ENCODE measurements at regions of chr15 and their contacts with region 1.

Region 1: GRCh38 chr15:85296615-85297402 is 83.6 kb upstream of the AKAP13 start:
- DNase-seq: peak; percentile 91
- H3K4me3 ChIP-seq: peak overlapping the region; percentile 37
- H3K27ac ChIP-seq: no peak overlapping the region
- H3K4me1 ChIP-seq: peaks cover 32% of the 10 kb centered on the region
- CTCF ChIP-seq: peak; percentile 93

Region 2: DNA sequence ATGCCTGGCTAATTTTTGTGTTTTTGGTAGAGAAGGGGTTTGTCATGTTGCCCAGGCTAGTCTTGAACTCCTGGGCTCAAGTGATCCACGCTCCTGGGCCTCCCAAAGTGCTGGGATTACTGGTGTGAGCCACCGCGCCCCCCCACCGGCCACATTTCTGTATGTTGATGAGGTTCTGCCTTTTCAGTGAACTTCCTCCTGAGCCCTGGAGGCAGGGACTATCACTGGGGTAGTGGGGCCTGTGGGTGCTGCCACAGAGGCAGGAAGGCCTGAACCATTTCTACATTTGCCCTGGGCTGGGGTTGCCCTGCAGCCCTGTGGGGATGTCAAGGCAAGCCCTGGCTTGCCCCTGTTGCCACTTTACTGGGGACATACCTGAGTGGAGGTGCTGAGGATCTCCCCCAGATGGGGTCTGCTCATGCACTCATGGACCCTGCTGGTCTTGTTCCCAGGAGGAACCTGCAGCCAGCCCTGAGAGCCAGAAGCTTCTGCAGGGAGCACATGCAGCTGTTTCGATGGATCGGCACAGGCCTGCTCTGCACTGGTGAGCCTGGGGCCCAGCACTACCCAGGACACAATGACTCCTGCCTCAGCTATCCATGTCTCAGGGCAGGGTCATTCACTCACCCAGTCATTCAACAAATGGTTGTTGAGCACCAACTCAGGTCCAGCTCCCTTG is 406.7 kb before region 1 on chr15:
- CTCF ChIA-PET with region 1: no interaction called
- POLR2A ChIA-PET with region 1: no interaction called
- intact Hi-C with region 1: no loop called
- DNase-seq: no peak
- H3K4me3 ChIP-seq: no peak overlapping the region
- H3K27ac ChIP-seq: no peak overlapping the region
- H3K4me1 ChIP-seq: no peaks in the 10 kb centered on the region
- CTCF ChIP-seq: no peak

Region 3: GRCh38 chr15:85168642-85169173 is 128.1 kb before region 1 on chr15:
- CTCF ChIA-PET with region 1: no interaction called
- POLR2A ChIA-PET with region 1: no interaction called
- intact Hi-C with region 1: no loop called
- DNase-seq: peak; percentile 47
- H3K4me3 ChIP-seq: no peak overlapping the region
- H3K27ac ChIP-seq: no peak overlapping the region
- H3K4me1 ChIP-seq: no peaks in the 10 kb centered on the region
- CTCF ChIP-seq: peak; percentile 79

Region 4: GRCh38 chr15:85324202-85324601 is 27.4 kb after region 1 on chr15:
- CTCF ChIA-PET with region 1: interaction called, 8 read pairs
- POLR2A ChIA-PET with region 1: interaction called, 12 read pairs
- intact Hi-C with region 1: no loop called
- DNase-seq: no peak
- H3K4me3 ChIP-seq: no peak overlapping the region
- H3K27ac ChIP-seq: no peak overlapping the region
- H3K4me1 ChIP-seq: peaks cover 43% of the 10 kb centered on the region
- CTCF ChIP-seq: no peak

Region 5: DNA sequence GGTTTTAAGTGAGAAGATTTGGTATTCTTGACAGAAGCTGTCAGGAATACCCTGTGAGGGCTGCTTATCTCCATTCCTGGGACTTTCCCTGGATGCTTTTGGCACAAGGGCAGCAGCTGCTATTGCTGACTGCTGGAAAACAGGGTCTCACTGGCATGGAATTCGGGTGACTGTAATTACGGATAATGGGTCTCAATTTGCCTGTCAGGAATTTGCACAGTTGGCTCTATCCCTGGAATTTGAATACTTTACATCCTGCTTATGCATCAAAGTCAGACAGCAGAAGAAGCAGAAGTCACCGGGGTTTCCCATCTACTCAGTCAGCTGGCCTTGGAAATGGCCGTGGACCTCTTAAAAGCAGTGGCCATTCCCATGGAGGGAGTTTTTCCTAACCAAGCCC is 57.7 kb after region 1 on chr15:
- CTCF ChIA-PET with region 1: no interaction called
- POLR2A ChIA-PET with region 1: no interaction called
- intact Hi-C with region 1: no loop called
- DNase-seq: no peak
- H3K4me3 ChIP-seq: no peak overlapping the region
- H3K27ac ChIP-seq: no peak overlapping the region
- H3K4me1 ChIP-seq: no peaks in the 10 kb centered on the region
- CTCF ChIP-seq: no peak

Region 6: GRCh38 chr15:85412956-85413854 is 116.4 kb after region 1 on chr15:
- CTCF ChIA-PET with region 1: interaction called, 4 read pairs
- POLR2A ChIA-PET with region 1: interaction called, 9 read pairs
- intact Hi-C with region 1: loop called (anchors 1 kb)
- DNase-seq: peak; percentile 90
- H3K4me3 ChIP-seq: peak overlapping the region; percentile 49
- H3K27ac ChIP-seq: peak overlapping the region; percentile 71
- H3K4me1 ChIP-seq: peaks cover 72% of the 10 kb centered on the region
- CTCF ChIP-seq: peak; percentile 54; the same call in 1 of the 2 replicates

Region 7: GRCh38 chr15:85485956-85486567 is 189.3 kb after region 1 on chr15:
- CTCF ChIA-PET with region 1: no interaction called
- POLR2A ChIA-PET with region 1: no interaction called
- intact Hi-C with region 1: loop called (anchors 5 kb)
- DNase-seq: peak; percentile 81
- H3K4me3 ChIP-seq: no peak overlapping the region
- H3K27ac ChIP-seq: no peak overlapping the region
- H3K4me1 ChIP-seq: peaks cover 76% of the 10 kb centered on the region
- CTCF ChIP-seq: peak; percentile 91

Region 8: DNA sequence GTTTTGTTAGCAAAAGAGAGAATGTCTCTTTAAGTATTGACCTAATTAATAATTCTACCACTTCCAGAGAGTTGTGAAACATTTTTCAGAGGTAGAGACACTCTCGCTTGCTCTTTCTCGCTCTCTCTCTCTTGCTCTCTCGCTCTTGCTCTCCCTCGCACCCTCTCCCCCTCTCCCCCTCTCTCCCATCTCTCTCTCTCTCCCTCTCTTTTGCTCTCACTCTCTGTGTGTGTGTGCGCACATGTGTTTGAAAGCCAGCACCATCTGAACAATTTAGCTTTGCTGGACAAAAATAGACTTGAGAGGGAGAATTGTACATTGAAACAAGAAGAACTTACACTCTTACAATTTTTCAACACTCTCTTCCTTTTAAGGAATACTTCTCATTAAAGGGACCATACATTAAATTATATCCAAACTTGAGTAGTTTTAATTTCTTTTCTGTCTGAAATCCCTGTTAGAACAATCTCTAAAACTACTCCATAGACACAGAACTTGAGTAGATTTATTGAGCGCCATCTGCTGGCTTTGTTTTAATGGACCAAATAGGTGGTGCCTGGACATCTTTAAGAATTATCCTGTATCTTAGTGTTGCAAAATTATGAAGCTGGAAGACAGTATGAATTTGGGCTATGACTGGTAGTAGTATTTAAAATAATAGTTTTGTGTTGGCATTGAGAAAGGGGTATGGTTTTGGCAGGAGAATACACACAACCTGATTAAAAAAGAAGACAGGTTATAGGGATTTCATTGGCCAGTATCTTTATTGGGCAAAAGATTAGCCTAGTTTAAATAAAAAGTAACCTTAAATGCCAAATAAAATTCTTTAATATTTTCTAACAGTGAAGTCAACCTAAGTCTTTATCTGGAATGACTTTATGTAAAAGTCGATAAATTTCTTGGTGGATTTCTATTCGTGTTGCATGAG is 208.2 kb after region 1 on chr15:
- CTCF ChIA-PET with region 1: no interaction called
- POLR2A ChIA-PET with region 1: interaction called, 4 read pairs
- intact Hi-C with region 1: loop called (anchors 1 kb)
- DNase-seq: peak; percentile 78
- H3K4me3 ChIP-seq: no peak overlapping the region
- H3K27ac ChIP-seq: peak overlapping the region; percentile 27
- H3K4me1 ChIP-seq: peaks cover 31% of the 10 kb centered on the region
- CTCF ChIP-seq: peak; percentile 99

Region 9: DNA sequence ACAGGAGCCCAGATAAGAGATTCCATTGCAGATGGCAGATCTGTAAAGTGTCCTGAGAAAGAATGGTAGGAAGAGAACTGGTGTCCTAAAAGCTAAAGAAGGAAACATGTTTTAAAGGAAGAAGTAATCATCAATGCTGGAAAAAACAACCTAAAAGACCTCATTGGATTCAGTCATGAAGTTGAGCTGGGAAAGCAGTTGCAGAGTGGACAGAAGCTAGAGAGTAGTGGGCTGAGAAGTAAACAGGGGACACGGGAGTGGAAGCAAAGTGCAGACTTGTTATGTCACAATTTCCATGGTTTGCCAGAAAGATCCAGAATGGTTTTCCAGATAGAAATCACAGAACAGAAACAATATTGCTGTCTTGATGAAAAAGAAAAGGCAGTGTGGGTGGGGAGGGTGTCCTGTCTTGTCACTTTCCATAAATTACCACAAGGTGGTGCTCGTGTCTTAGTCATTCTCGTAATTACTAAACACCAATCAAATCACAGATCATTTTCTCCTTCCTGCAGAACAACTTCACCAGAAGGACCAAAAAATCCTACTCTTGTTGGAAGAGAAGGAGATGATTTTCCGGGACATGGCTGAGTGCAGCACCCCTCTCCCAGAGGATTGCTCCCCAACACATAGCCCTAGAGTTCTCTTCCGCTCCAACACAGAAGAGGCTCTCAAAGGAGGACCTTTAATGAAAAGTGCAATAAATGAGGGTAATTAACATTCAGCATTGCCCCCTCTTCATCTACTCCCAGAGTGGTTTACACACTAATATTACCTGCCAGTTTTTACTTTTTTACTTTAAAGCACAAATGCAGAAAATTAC is 433.4 kb after region 1 on chr15:
- CTCF ChIA-PET with region 1: no interaction called
- POLR2A ChIA-PET with region 1: no interaction called
- intact Hi-C with region 1: loop called (anchors 10 kb)
- DNase-seq: peak; percentile 74
- H3K4me3 ChIP-seq: no peak overlapping the region
- H3K27ac ChIP-seq: peak overlapping the region; percentile 16
- H3K4me1 ChIP-seq: no peaks in the 10 kb centered on the region
- CTCF ChIP-seq: peak; percentile 85

Region 10: DNA sequence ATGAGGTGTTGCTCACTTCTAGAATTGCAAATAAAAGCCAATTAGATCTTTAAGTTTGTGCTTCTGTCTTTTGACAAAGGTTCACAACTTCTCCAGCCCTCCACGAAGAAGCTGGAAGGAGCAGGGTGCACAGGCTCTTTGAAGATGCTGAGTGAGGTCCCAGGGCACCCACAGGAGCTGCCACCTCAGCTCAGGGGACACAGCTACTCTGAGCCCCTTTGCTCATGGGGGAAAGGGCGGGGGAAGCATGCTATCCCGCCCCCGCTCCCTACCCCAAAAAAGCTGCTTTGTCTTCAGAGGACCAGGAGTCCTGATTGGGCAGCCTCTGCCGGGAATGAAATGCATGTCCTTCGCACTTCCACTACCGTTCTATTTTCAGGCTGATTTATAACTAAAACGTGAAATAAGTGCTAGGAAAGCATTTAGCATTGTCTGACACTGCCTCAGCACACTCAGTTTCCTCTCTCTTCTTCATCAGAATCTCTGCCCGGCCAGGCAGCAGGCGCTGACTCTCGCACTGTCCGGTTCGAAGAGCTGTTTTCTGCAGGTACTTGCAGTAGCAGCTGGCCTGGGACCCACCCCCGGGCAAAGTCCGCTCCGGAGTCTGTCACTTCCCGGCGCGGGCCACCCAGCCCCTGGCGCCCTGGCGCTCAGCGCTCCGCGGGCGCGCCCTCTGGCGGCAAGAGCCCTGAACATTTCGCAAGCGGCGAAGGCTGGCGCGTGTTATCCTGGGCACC is 543.4 kb after region 1 on chr15:
- CTCF ChIA-PET with region 1: no interaction called
- POLR2A ChIA-PET with region 1: no interaction called
- intact Hi-C with region 1: loop called (anchors 2 kb)
- DNase-seq: peak; percentile 82
- H3K4me3 ChIP-seq: peak overlapping the region; percentile 17
- H3K27ac ChIP-seq: no peak overlapping the region
- H3K4me1 ChIP-seq: peaks cover 9% of the 10 kb centered on the region
- CTCF ChIP-seq: peak; percentile 95

Measured in OCI-LY7 (cell line).